Left cardiac atrium (tissue), 4 donors: ENCODE measurements at regions of chr10 and their contacts with region 1.

Region 1: GRCh38 chr10:109183366-109183765 is 739.9 kb downstream of the XPNPEP1 start:
- DNase-seq: no peak
- ATAC-seq: no peak

Region 2: GRCh38 chr10:108812296-108812695 is 371.1 kb before region 1 on chr10:
- intact Hi-C with region 1: no loop called
- DNase-seq: no peak
- ATAC-seq: no peak

Region 3: GRCh38 chr10:108894402-108895301 is 288.7 kb before region 1 on chr10:
- intact Hi-C with region 1: no loop called
- DNase-seq: no peak
- ATAC-seq: no peak

Region 4: DNA sequence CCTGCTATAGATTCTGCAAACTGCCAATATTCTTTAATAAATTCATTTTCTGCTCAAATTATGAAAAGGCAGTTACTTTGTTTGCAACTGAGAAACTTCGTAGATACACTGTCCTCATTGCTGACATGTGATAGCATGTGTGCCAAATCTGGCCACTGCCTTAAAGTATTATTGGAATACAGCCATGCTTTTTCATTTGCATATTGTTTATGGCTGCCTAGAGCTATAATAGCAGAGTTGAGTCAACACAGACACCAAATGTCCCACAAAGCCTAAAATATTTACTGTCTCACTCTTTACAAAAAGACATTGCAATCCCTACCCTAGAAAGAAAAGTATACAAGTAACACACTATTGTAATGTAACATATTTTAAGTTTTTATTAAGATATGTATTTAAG is 92.6 kb after region 1 on chr10:
- intact Hi-C with region 1: no loop called
- DNase-seq: no peak
- ATAC-seq: no peak

Region 5: GRCh38 chr10:109427411-109427810 is 244.0 kb after region 1 on chr10:
- intact Hi-C with region 1: loop called in 1 of 2 experiments (anchors 10 kb)
- DNase-seq: no peak
- ATAC-seq: no peak

Region 6: DNA sequence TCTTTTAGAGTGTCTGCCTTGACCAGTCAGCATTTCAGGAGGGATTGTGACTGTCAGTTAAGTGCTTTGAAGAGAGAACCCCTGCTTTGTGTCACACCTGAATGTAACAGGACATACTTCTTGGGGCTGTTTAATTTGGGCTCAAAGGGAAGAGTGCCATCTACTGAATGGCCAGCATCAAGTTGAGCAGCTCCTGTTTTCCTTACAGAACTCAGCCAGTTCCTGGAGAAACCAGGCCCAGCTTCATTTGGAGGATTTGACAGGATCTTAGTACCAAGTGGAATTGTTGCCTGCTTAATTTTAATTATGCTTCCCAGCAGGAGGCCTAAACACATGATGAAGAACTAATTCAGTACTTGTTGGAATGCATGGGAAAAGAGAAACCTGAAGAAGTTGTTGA is 832.7 kb after region 1 on chr10:
- intact Hi-C with region 1: no loop called
- DNase-seq: no peak
- ATAC-seq: peak in 1 of 2 donors; percentile 25